CD4-positive, alpha-beta T cell (primary cell): ENCODE measurements at regions of chr2 and their contacts with region 1.

Region 1: GRCh38 chr2:18749912-18750526 is 160.7 kb upstream of the NT5C1B start:
- DNase-seq: peak in 9 of 14 experiments; percentile 2 to 50 (median 13)
- ATAC-seq: no peak
- H3K4me3 ChIP-seq: no peak overlapping the region
- H3K4me3 Mint-ChIP-seq: no peak overlapping the region
- H3K27ac ChIP-seq: no peak overlapping the region
- H3K27ac Mint-ChIP-seq: no peak overlapping the region
- H3K4me1 ChIP-seq: no peaks in the 10 kb centered on the region
- H3K4me1 Mint-ChIP-seq: no peaks in the 10 kb centered on the region
- H3K27me3 ChIP-seq: no peaks in the 10 kb centered on the region
- H3K27me3 Mint-ChIP-seq: no peaks in the 10 kb centered on the region
- CTCF ChIP-seq: peak; percentile 59

Region 2: GRCh38 chr2:18520451-18521425 is 229.3 kb before region 1 on chr2:
- CTCF ChIA-PET with region 1: no interaction called
- POLR2A ChIA-PET with region 1: no interaction called
- intact Hi-C with region 1: loop called (anchors 2 to 10 kb)
- DNase-seq: peak; percentile 57 to 81 (median 70)
- ATAC-seq: peak; percentile 68
- H3K4me3 ChIP-seq: no peak overlapping the region
- H3K4me3 Mint-ChIP-seq: no peak overlapping the region
- H3K27ac ChIP-seq: no peak overlapping the region
- H3K27ac Mint-ChIP-seq: no peak overlapping the region
- H3K4me1 ChIP-seq: no peaks in the 10 kb centered on the region
- H3K4me1 Mint-ChIP-seq: no peaks in the 10 kb centered on the region
- H3K27me3 ChIP-seq: peaks cover 0 to 5% of the 10 kb centered on the region in 2 experiments
- H3K27me3 Mint-ChIP-seq: peaks cover 40% of the 10 kb centered on the region
- CTCF ChIP-seq: peak; percentile 88

Region 3: GRCh38 chr2:19362755-19363473 is 612.9 kb after region 1 on chr2:
- CTCF ChIA-PET with region 1: no interaction called
- POLR2A ChIA-PET with region 1: no interaction called
- intact Hi-C with region 1: loop called in 1 of 2 experiments (anchors 10 kb)
- DNase-seq: peak in 8 of 14 experiments; percentile 25 to 68 (median 58)
- ATAC-seq: peak; percentile 47
- H3K4me3 ChIP-seq: peak overlapping the region; percentile 71
- H3K4me3 Mint-ChIP-seq: peak overlapping the region; percentile 91
- H3K27ac ChIP-seq: no peak overlapping the region
- H3K27ac Mint-ChIP-seq: peak overlapping the region; percentile 63
- H3K4me1 ChIP-seq: peaks cover 40% of the 10 kb centered on the region
- H3K4me1 Mint-ChIP-seq: peaks cover 46% of the 10 kb centered on the region
- H3K27me3 ChIP-seq: peaks cover 36% of the 10 kb centered on the region in 2 experiments
- H3K27me3 Mint-ChIP-seq: peaks cover 65% of the 10 kb centered on the region
- CTCF ChIP-seq: peak; percentile 46

Region 4: GRCh38 chr2:19507137-19507536 is 757.1 kb after region 1 on chr2:
- CTCF ChIA-PET with region 1: no interaction called
- POLR2A ChIA-PET with region 1: no interaction called
- intact Hi-C with region 1: no loop called
- DNase-seq: no peak
- ATAC-seq: no peak
- H3K4me3 ChIP-seq: no peak overlapping the region
- H3K4me3 Mint-ChIP-seq: no peak overlapping the region
- H3K27ac ChIP-seq: no peak overlapping the region
- H3K27ac Mint-ChIP-seq: no peak overlapping the region
- H3K4me1 ChIP-seq: no peaks in the 10 kb centered on the region
- H3K4me1 Mint-ChIP-seq: no peaks in the 10 kb centered on the region
- H3K27me3 ChIP-seq: peaks cover 3 to 4% of the 10 kb centered on the region in 2 experiments
- H3K27me3 Mint-ChIP-seq: peaks cover 57% of the 10 kb centered on the region
- CTCF ChIP-seq: no peak

Region 5: GRCh38 chr2:19868705-19869580 is 1118.9 kb after region 1 on chr2:
- CTCF ChIA-PET with region 1: no interaction called
- POLR2A ChIA-PET with region 1: no interaction called
- intact Hi-C with region 1: loop called in 1 of 2 experiments (anchors 5 kb)
- DNase-seq: peak; percentile 49 to 82 (median 68)
- ATAC-seq: peak; percentile 92
- H3K4me3 ChIP-seq: peak overlapping the region; percentile 84
- H3K4me3 Mint-ChIP-seq: peak overlapping the region; percentile 98
- H3K27ac ChIP-seq: peak overlapping the region; percentile 69 to 75
- H3K27ac Mint-ChIP-seq: peak overlapping the region; percentile 99
- H3K4me1 ChIP-seq: peaks cover 24% of the 10 kb centered on the region
- H3K4me1 Mint-ChIP-seq: peaks cover 41% of the 10 kb centered on the region
- H3K27me3 ChIP-seq: no peaks in the 10 kb centered on the region
- H3K27me3 Mint-ChIP-seq: no peaks in the 10 kb centered on the region
- CTCF ChIP-seq: no peak